Gastrocnemius medialis (tissue), 4 donors: ENCODE measurements at regions of chr5 and their contacts with region 1.

Region 1: GRCh38 chr5:143506881-143507551 is 103.5 kb upstream of the NR3C1 start:
- DNase-seq: peak in 1 of 2 donors; percentile 39
- ATAC-seq: peak; percentile 93 to 94
- H3K4me3 ChIP-seq: no peak overlapping the region
- H3K27ac ChIP-seq: peak overlapping the region; percentile 56 to 70 (median 62)
- H3K4me1 ChIP-seq: peaks cover 25 to 28% of the 10 kb centered on the region in 2 donors
- H3K27me3 ChIP-seq: no peaks in the 10 kb centered on the region
- CTCF ChIP-seq: no peak
- POLR2A ChIP-seq: no peak

Region 2: DNA sequence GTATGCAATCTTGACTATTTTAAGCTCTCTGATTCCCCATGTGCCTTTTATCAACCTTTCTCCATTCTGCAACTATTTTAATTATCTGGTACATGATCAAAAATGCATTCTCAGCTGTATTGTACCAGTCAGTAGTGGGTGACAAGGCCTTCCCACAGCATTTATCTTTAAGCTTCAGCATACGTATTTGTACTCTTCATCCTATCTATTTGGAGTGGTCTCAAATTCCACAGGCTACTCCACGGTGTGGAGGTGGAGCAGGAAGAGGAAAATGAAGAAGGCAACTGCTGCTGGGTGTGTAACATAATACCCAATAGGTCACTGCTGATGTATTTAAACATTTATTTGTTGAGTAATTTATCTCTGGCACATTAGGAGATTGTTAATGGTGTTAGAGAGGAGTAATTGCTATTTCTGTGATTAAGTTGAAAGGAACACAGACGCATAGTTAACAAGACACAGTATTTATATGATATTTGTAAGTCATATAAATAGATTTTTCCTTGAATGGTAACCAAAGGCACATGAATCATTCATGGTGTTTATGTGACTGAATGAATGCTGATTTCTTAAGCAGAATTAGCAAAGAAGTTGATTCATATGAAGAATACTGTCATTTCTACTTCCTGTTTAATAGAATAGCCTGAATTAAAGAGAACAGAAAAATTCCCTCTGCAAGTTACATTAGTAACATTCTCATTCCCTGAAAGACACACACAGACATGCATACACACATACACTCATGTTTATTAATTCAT is 50.2 kb after region 1 on chr5:
- in situ Hi-C with region 1: no loop called
- intact Hi-C with region 1: loop called (anchors 10 kb)
- DNase-seq: no peak
- ATAC-seq: peak; percentile 21 to 28
- H3K4me3 ChIP-seq: no peak overlapping the region
- H3K27ac ChIP-seq: peak overlapping the region; percentile 37 to 60 (median 50)
- H3K4me1 ChIP-seq: peaks cover 26 to 38% of the 10 kb centered on the region in 2 donors
- H3K27me3 ChIP-seq: no peaks in the 10 kb centered on the region
- CTCF ChIP-seq: no peak
- POLR2A ChIP-seq: no peak